ENCODE measurements at regions of chr16 and their contacts with region 1.

Region 1: GRCh38 chr16:88383401-88384221 is 852 bp downstream of the ZNF469 start:
- DNase-seq: peak; percentile 44 to 74 (median 71)
- H3K4me3 ChIP-seq: peak overlapping the region; percentile 39
- H3K27ac ChIP-seq: no peak overlapping the region
- H3K4me1 ChIP-seq: peaks cover 19% of the 10 kb centered on the region
- H3K27me3 ChIP-seq: no peaks in the 10 kb centered on the region
- CTCF ChIP-seq: peak; percentile 22 to 69 (median 64)
- EP300 ChIP-seq: no peak
- POLR2A ChIP-seq: no peak

Region 2: GRCh38 chr16:87982491-87983415 is 400.9 kb before region 1 on chr16:
- intact Hi-C with region 1: loop called in 1 of 4 experiments (anchors 5 kb)
- DNase-seq: no peak
- H3K4me3 ChIP-seq: no peak overlapping the region
- H3K27ac ChIP-seq: no peak overlapping the region
- H3K4me1 ChIP-seq: no peaks in the 10 kb centered on the region
- H3K27me3 ChIP-seq: no peaks in the 10 kb centered on the region
- CTCF ChIP-seq: no peak
- EP300 ChIP-seq: no peak
- POLR2A ChIP-seq: no peak

Region 3: GRCh38 chr16:88194397-88195268 is 189.0 kb before region 1 on chr16:
- intact Hi-C with region 1: loop called in 1 of 4 experiments (anchors 10 kb)
- DNase-seq: peak; percentile 71 to 81 (median 77)
- H3K4me3 ChIP-seq: no peak overlapping the region
- H3K27ac ChIP-seq: peak overlapping the region; percentile 17 to 40
- H3K4me1 ChIP-seq: peaks cover 6% of the 10 kb centered on the region
- H3K27me3 ChIP-seq: no peaks in the 10 kb centered on the region
- CTCF ChIP-seq: peak in 1 of 3 donors; percentile 4
- EP300 ChIP-seq: no peak
- POLR2A ChIP-seq: no peak

Measured in ovary (tissue), 10 donors.